SK-N-SH (cell line): ENCODE measurements at regions of chr10 and their contacts with region 1.

Region 1: GRCh38 chr10:129888784-129889616 is 75.1 kb downstream of the EBF3 start:
- DNase-seq: peak; percentile 89
- H3K4me3 ChIP-seq: no peak overlapping the region
- H3K27ac ChIP-seq: no peak overlapping the region
- H3K4me1 ChIP-seq: peaks cover 0 to 8% of the 10 kb centered on the region in 2 experiments; a peak in 3 of 4 replicates
- H3K27me3 ChIP-seq: no peaks in the 10 kb centered on the region
- CTCF ChIP-seq: peak; percentile 24; the same call in 1 of the 2 replicates
- EP300 ChIP-seq: no peak
- RAD21 ChIP-seq: peak; percentile 60

Region 2: DNA sequence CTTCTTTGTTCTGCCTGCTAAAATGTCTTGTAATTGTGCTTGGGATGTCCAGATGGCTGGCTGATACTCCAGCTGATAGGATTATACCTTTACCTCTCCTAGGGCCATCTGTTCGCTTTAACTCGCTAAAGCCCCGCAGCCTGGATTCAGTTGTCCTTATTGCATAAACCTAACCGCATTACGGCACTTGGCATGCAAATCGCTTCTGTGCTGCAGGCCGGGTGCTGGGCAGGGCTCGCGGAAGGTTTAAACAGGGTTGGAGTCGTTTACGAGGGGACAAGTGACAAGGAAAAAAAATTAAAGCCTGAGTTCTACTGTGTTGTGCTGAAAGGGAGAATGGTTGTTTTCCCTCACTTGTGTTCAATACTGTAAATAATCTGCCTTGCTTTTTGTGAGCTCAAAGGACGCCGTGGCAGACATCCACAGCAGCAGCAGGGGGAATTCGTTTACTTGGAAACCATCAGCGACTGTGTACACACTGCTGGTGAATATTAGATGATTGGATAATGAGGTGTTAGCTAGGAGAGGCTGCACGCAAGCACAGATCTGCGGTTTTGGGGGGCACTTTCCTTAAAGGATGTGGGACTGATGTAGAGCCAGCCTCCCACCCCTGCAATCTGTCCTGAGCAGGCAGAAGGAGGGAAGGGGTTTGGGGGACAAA is 17.9 kb before region 1 on chr10:
- CTCF ChIA-PET with region 1: interaction called, 15 read pairs
- POLR2A ChIA-PET with region 1: no interaction called
- DNase-seq: peak; percentile 82
- H3K4me3 ChIP-seq: no peak overlapping the region
- H3K27ac ChIP-seq: no peak overlapping the region; a peak in 1 of 4 replicates
- H3K4me1 ChIP-seq: peaks cover 0 to 21% of the 10 kb centered on the region in 2 experiments; a peak in 1 of 4 replicates
- H3K27me3 ChIP-seq: no peaks in the 10 kb centered on the region
- CTCF ChIP-seq: no peak
- EP300 ChIP-seq: peak in 1 of 2 experiments; percentile 75; a peak in 2 of 4 replicates
- RAD21 ChIP-seq: no peak

Region 3: DNA sequence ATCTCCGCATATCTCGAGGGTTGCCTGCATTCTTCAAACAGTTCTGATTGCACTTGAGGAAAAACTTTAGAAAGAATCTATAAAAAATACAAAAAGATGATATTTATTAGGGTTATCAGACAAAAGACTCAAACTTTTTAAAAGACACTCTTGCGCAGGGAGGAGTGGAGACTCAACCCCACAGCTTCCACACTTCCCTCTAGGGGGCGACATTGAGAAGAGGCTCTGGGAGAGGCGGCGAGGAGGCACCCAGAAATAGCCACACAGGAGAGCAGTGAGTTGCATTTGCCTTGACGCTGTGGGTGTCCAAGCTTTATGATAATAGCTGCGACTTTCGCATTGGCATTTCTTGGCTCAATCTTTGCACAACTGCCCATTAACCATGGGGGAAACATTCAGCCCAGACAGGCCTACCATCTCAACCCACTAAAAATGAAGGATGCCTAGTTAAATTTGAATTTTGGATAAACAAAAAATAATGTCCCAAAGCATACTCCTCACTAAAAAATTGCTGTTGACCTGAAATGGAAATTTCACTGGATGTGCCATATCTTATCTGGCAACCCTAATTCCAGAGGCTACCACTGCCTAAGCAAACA is 11.1 kb before region 1 on chr10:
- CTCF ChIA-PET with region 1: interaction called, 38 read pairs
- POLR2A ChIA-PET with region 1: no interaction called
- DNase-seq: peak; percentile 50
- H3K4me3 ChIP-seq: no peak overlapping the region
- H3K27ac ChIP-seq: no peak overlapping the region
- H3K4me1 ChIP-seq: no peaks in the 10 kb centered on the region
- H3K27me3 ChIP-seq: no peaks in the 10 kb centered on the region
- CTCF ChIP-seq: 0 out of 2 replicates have a peak, but pooled peaks have one; percentile 13
- EP300 ChIP-seq: no peak
- RAD21 ChIP-seq: peak; percentile 18; the same call in 1 of the 2 replicates

Region 4: DNA sequence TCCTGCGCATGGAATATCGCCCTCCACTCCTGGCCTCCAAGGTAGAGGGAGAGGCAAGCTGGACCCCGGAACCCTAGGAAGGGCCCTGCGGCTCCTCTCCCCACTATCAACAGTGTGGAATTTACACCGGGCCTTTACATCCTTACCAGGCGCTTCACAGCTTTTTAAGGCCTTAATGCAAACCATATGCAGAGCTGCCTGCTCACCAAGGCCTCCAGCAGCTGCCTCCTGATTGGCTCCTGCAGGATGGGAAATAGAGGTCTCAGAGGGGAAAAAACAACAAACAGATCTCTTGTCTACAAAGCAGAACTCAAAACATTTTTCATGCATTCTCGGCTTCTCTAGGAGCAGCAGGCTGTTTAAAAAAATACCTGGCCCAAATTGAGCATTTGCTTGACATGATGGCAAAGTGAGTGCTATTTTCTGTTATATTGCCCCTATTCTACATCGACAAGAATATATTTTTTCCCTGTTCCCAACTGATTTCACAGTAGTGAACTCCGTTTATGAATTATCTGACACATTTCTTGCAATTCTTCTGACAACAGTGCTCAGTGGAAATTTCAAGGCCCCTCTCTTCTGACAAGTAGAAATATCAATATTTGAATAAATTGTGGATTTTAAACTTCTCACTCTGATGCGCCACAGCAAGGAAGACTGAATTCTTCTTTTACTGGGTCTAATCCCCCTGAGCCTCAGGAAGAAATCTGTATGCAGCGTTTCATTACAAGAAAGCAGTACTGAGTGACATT is 23.3 kb after region 1 on chr10:
- CTCF ChIA-PET with region 1: interaction called, 14 read pairs
- POLR2A ChIA-PET with region 1: no interaction called
- DNase-seq: peak; percentile 84
- H3K4me3 ChIP-seq: no peak overlapping the region
- H3K27ac ChIP-seq: no peak overlapping the region
- H3K4me1 ChIP-seq: peaks cover 0 to 8% of the 10 kb centered on the region in 2 experiments; a peak in 2 of 4 replicates
- H3K27me3 ChIP-seq: no peaks in the 10 kb centered on the region
- CTCF ChIP-seq: no peak
- EP300 ChIP-seq: no peak
- RAD21 ChIP-seq: no peak

Region 5: GRCh38 chr10:129949891-129950291 is 60.9 kb after region 1 on chr10:
- CTCF ChIA-PET with region 1: interaction called, 18 read pairs
- POLR2A ChIA-PET with region 1: interaction called, 3 read pairs
- DNase-seq: peak; percentile 78
- H3K4me3 ChIP-seq: no peak overlapping the region
- H3K27ac ChIP-seq: no peak overlapping the region
- H3K4me1 ChIP-seq: peaks cover 0 to 26% of the 10 kb centered on the region in 2 experiments; a peak in 3 of 4 replicates
- H3K27me3 ChIP-seq: no peaks in the 10 kb centered on the region
- CTCF ChIP-seq: no peak
- EP300 ChIP-seq: no peak
- RAD21 ChIP-seq: no peak

Region 6: DNA sequence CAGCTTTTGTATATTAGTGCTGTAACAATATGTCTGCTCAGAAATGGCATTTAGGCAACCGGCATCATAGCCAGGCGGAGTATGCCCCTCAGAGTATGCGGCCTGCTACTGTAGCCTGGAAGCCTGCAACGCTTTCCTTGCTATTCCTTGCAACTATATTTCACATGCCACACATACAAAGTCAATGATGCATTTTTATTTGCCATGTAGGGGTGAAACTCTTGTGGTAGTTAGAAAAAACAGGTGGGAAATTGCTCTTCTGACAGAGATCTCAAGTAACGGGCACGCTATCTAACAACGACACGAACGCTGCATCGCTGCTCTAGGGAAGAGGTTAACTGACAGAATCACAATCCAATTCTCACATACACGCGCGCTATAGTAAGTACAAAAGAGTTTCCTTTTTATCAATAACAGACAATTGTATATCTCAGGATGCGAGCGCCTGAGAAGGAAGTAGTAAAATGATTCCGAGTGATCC is 69.2 kb after region 1 on chr10:
- CTCF ChIA-PET with region 1: interaction called, 13 read pairs
- POLR2A ChIA-PET with region 1: no interaction called
- DNase-seq: no peak
- H3K4me3 ChIP-seq: no peak overlapping the region
- H3K27ac ChIP-seq: no peak overlapping the region
- H3K4me1 ChIP-seq: peaks cover 0 to 9% of the 10 kb centered on the region in 2 experiments; a peak in 1 of 4 replicates
- H3K27me3 ChIP-seq: peaks cover 58% of the 10 kb centered on the region
- CTCF ChIP-seq: no peak
- EP300 ChIP-seq: no peak
- RAD21 ChIP-seq: peak; percentile 64

Region 7: GRCh38 chr10:129971381-129972144 is 82.6 kb after region 1 on chr10:
- CTCF ChIA-PET with region 1: interaction called, 35 read pairs
- POLR2A ChIA-PET with region 1: no interaction called
- DNase-seq: peak; percentile 96
- H3K4me3 ChIP-seq: peak overlapping the region; percentile 29 to 31; a peak in 2 of 4 replicates
- H3K27ac ChIP-seq: no peak overlapping the region
- H3K4me1 ChIP-seq: no peaks in the 10 kb centered on the region; a peak in 1 of 4 replicates
- H3K27me3 ChIP-seq: peaks cover 43% of the 10 kb centered on the region
- CTCF ChIP-seq: peak; percentile 35
- EP300 ChIP-seq: no peak
- RAD21 ChIP-seq: peak; percentile 67